Panc1 (cell line): ENCODE measurements at regions of chr20 and their contacts with region 1.

Region 1: DNA sequence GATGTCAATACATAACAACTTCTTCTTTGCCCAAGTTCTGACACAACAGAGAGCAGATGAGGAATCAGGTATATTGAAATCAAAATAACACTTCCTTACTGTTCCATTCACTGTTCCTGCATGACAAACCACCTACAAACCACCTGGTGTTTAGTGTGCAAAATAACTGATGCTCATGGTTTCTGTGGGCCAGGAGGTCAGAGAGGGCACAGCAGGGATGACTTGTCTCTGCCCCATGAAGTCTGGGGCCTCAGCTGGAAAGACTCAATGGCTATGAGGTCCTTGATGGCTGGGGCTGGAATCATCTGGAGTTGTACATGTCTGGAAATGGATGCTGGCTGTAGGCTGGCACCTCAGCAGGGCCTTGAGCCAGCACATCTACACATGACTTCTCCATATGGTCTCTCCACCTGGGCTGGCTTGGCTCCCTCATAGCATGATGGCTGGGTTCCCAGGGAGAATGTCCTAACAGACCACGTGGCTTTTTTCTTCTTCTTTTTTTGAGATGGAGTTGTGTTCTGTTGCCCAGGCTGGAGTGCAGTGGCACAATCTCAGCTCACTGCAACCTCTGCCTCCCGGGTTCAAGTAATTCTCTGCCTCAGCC is 7.4 kb upstream of the COX4I2 start:
- DNase-seq: no peak
- ATAC-seq: no peak
- H3K4me3 ChIP-seq: no peak overlapping the region
- H3K27ac ChIP-seq: no peak overlapping the region
- H3K4me1 ChIP-seq: no peaks in the 10 kb centered on the region
- H3K27me3 ChIP-seq: no peaks in the 10 kb centered on the region
- CTCF ChIP-seq: no peak

Region 2: DNA sequence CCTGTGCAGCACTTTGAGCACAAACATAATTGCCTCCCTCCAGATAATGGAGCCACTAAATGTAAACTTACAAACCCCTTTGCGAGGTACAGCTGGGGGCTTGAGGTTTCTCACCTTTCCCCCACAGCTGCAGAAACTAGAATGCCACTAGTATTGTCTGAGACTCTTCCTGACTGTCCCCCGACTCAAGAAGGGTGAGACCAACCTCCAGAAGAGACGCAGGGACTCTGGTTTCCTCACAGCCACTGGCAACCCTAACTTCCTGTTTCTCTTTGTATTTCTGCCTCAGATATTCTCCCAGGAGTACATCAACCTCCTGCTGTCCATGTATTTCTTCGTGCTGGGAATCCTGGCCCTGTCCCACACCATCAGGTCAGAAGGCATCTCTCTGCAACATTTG is 92.4 kb before region 1 on chr20:
- CTCF ChIA-PET with region 1: interaction called, 14 read pairs
- POLR2A ChIA-PET with region 1: no interaction called
- in situ Hi-C with region 1: no loop called
- intact Hi-C with region 1: no loop called
- DNase-seq: no peak
- ATAC-seq: no peak
- H3K4me3 ChIP-seq: no peak overlapping the region
- H3K27ac ChIP-seq: no peak overlapping the region
- H3K4me1 ChIP-seq: no peaks in the 10 kb centered on the region
- H3K27me3 ChIP-seq: no peaks in the 10 kb centered on the region
- CTCF ChIP-seq: no peak

Region 3: GRCh38 chr20:31587545-31588389 is 42.5 kb before region 1 on chr20:
- CTCF ChIA-PET with region 1: interaction called, 3 read pairs
- POLR2A ChIA-PET with region 1: interaction called, 11 read pairs
- in situ Hi-C with region 1: no loop called
- intact Hi-C with region 1: no loop called
- DNase-seq: no peak
- ATAC-seq: peak; percentile 83
- H3K4me3 ChIP-seq: peak overlapping the region; percentile 38 to 54
- H3K27ac ChIP-seq: peak overlapping the region; percentile 82
- H3K4me1 ChIP-seq: peaks cover 36% of the 10 kb centered on the region
- H3K27me3 ChIP-seq: no peaks in the 10 kb centered on the region
- CTCF ChIP-seq: no peak

Region 4: DNA sequence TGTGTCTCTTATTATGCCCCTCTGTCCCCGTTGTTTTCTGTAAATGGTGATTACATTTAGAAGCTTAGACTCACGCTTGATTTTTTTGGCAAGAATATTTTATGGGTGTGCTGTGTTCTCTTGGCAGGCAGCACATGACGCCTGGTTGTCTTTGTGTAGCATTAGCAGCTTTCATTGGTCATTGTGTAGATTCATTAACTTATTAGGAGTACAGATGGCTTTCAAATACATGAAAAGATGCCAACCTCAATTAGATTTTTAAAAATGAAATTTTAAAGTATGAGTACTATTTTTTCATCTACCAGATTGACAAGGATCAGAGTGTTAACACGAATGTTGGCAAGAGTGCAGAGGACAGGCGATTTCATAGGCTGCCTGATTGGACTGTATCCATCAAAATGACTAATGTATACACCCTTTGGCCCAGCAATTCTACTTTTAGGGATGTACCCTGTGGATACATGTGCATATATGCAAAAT is 22.7 kb after region 1 on chr20:
- CTCF ChIA-PET with region 1: interaction called, 13 read pairs
- POLR2A ChIA-PET with region 1: no interaction called
- in situ Hi-C with region 1: no loop called
- intact Hi-C with region 1: no loop called
- DNase-seq: no peak
- ATAC-seq: no peak
- H3K4me3 ChIP-seq: no peak overlapping the region
- H3K27ac ChIP-seq: no peak overlapping the region
- H3K4me1 ChIP-seq: no peaks in the 10 kb centered on the region
- H3K27me3 ChIP-seq: no peaks in the 10 kb centered on the region
- CTCF ChIP-seq: no peak

Region 5: GRCh38 chr20:31674895-31675827 is 44.9 kb after region 1 on chr20:
- CTCF ChIA-PET with region 1: interaction called, 18 read pairs
- POLR2A ChIA-PET with region 1: interaction called, 7 read pairs
- in situ Hi-C with region 1: no loop called
- intact Hi-C with region 1: no loop called
- DNase-seq: no peak
- ATAC-seq: peak; percentile 23
- H3K4me3 ChIP-seq: no peak overlapping the region
- H3K27ac ChIP-seq: peak overlapping the region; percentile 27
- H3K4me1 ChIP-seq: peaks cover 72% of the 10 kb centered on the region
- H3K27me3 ChIP-seq: no peaks in the 10 kb centered on the region
- CTCF ChIP-seq: no peak

Region 6: GRCh38 chr20:31723319-31724078 is 93.2 kb after region 1 on chr20:
- CTCF ChIA-PET with region 1: interaction called, 67 read pairs
- POLR2A ChIA-PET with region 1: no interaction called
- in situ Hi-C with region 1: no loop called
- intact Hi-C with region 1: loop called (anchors 2 kb)
- DNase-seq: peak; percentile 99
- ATAC-seq: peak; percentile 92
- H3K4me3 ChIP-seq: peak overlapping the region; percentile 60 to 85
- H3K27ac ChIP-seq: peak overlapping the region; percentile 99
- H3K4me1 ChIP-seq: peaks cover 33% of the 10 kb centered on the region
- H3K27me3 ChIP-seq: no peaks in the 10 kb centered on the region
- CTCF ChIP-seq: peak; percentile 100

Region 7: DNA sequence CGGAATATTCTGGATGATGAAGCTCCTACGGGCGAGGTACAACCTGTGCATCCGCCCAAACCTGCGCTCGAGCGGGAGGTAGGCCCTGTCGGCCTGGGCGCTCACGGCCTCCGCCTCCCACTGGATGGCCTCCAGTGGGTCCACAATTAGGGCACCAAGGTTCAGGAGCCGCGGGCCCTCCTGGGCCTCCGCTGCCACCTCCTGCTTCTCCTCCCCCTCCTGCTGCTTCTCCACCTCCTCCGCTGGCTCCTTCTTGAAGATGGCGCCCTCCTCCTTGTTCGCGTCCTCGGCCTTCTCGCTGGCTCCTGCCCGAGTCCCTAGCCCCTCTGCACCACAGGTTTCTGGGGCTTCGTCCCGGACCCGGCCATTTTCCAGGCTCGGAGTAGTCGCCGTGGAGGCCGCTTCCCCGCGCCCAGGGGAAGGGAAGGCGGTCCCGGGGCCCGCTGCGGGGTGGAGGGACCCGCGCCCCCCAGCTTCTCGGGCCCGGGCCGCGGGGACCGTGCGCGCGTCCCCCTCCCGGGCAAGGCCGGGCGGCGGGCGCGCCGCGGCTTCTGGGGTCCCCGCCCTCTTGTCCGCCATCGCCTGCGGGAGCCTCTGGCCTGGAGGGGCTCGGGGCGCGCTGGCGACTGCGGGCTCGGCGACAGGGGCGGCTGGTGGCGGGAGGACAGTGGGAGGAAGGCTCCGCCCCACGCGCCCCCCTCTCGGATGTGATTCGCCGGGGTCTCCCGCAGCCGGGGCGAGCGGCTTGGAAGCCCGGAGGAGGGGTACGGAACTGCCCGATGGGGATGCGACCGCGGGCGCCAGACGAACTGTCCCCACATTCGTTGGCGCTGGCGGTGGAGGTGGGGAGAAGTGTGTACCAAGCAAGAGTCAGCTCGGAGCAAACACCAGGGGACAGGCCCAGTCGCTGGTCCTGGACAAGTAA is 559.7 kb after region 1 on chr20:
- CTCF ChIA-PET with region 1: no interaction called
- POLR2A ChIA-PET with region 1: no interaction called
- in situ Hi-C with region 1: no loop called
- intact Hi-C with region 1: loop called (anchors 10 kb)
- DNase-seq: no peak
- ATAC-seq: peak; percentile 69
- H3K4me3 ChIP-seq: peak overlapping the region; percentile 42 to 48
- H3K27ac ChIP-seq: peak overlapping the region; percentile 58
- H3K4me1 ChIP-seq: peaks cover 9% of the 10 kb centered on the region; the same call in 1 of the 2 replicates
- H3K27me3 ChIP-seq: no peaks in the 10 kb centered on the region
- CTCF ChIP-seq: no peak